Activated CD4-positive, alpha-beta memory T cell treated with anti-CD3 and anti-CD28 coated beads for 36 hours (primary cell): ENCODE measurements at regions of chr11 and their contacts with region 1.

Region 1: DNA sequence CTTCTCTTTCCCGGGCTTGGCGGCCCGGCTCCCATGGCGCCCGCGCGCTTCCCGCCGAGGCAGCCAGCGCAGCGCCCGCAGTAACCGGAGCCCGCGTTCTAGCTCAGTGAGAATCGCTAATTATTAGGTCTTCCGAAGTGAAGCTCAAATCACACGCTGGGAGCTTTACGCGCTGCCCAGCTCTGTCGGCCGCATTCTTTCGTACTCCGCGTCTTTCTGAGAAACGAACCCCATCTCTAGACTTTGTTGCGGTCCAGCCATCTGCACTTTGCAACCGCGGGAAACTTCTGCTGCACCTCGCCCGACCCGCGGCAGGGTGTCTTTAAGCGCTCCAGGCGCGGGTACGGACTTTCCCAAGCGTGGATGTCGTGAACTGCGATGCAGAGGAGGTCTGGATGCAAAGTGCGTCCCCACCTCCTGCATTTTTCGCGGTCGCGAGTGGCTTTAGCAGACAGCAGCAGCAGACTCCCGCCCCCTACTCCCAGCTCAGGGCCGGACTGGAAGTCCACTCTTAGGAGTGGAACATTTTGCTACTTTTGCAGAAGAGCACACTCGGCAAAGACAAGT is 6.0 kb upstream of the PAX6 start:
- DNase-seq: no peak
- H3K4me3 Mint-ChIP-seq: peak overlapping the region; percentile 10
- H3K27ac Mint-ChIP-seq: no peak overlapping the region
- H3K4me1 Mint-ChIP-seq: peaks cover 33% of the 10 kb centered on the region
- H3K27me3 Mint-ChIP-seq: peaks cover 67% of the 10 kb centered on the region

Region 2: GRCh38 chr11:31764766-31765165 is 52.4 kb before region 1 on chr11:
- CTCF ChIA-PET with region 1: no interaction called
- POLR2A ChIA-PET with region 1: no interaction called
- intact Hi-C with region 1: no loop called
- DNase-seq: no peak
- H3K4me3 Mint-ChIP-seq: no peak overlapping the region
- H3K27ac Mint-ChIP-seq: no peak overlapping the region
- H3K4me1 Mint-ChIP-seq: no peaks in the 10 kb centered on the region
- H3K27me3 Mint-ChIP-seq: no peaks in the 10 kb centered on the region

Region 3: DNA sequence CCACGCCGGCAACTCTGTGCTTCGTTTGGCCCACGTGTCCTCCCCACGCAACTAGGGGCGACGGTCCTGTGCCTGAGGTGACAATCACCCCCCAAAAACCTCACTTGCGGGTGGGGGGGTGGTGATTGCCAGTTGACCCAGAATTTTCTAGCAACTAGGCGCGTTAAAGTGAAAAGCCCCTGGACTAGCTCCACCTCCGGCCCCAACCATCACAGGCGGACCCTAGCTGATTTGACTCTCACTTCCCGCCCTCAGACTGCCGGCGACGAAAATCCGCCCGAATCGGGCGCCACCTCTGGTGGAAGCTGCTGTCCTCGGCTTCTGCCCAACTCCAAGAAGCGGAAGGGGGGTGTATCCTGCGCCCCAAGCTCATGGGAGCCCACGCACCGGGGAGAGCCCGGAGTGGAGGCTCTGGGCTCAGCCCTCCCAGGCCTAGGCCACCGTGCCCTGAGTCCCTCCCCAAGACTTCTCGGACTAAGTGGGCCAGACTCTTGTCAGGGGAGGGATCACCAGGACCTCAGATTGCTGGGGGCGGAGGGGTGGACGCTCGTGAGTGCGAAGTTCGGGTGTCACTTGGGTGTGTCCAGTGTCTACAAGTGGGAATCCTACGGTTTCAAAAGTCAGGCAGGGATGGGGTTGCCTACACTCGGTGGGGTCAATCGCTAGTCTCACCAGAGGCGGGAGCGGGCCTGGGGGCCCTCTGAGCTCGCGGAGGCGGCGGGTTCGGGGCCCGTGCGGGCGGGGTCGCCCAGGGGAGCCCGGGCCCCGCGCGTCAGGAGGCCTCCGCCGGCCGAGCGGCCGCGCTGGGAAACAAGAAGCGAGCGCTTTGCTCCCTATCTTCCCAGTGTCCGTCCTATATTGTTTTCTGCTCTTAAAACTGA is 18.3 kb before region 1 on chr11:
- CTCF ChIA-PET with region 1: no interaction called
- POLR2A ChIA-PET with region 1: no interaction called
- intact Hi-C with region 1: loop called (anchors 2 kb)
- DNase-seq: peak; percentile 53
- H3K4me3 Mint-ChIP-seq: peak overlapping the region; percentile 8
- H3K27ac Mint-ChIP-seq: no peak overlapping the region
- H3K4me1 Mint-ChIP-seq: peaks cover 36% of the 10 kb centered on the region
- H3K27me3 Mint-ChIP-seq: peaks cover 76% of the 10 kb centered on the region

Region 4: DNA sequence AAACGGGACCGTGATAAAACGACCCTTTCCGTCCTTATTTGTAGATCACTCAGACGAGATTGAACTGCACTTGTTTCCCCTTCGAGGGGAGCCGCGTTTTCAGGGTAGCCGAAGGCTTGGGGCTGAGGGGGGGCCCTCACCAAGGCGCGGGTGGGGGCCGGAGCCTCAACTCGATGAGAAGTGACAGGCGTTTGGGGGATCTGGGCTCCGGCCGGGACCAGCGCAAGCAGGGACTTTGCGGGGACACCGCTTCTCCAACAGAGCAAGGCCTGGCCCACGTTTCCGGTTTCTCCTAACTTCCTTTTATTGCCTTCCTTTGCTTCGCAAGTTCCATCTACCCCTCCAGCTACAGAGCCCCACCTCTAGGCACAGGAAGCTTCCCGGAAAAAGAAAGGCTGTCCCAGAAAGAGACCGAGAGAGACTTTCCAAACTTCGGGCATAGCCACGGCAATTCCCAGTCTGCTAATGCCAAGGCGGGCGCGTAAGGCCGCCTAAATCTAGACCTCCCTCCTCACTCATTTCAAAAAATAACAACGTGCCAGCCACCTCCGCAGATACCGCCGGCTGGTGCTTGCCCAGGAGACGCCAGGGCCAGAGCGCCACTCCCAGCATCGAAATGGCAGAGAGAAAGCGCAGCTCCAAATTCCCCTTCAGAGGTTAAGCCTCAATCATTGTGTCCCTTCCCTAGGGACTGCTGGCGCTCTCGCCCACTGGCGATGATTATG is 12.7 kb before region 1 on chr11:
- CTCF ChIA-PET with region 1: no interaction called
- POLR2A ChIA-PET with region 1: interaction called, 3 read pairs
- intact Hi-C with region 1: loop called (anchors 1 kb)
- DNase-seq: no peak
- H3K4me3 Mint-ChIP-seq: peak overlapping the region; percentile 17
- H3K27ac Mint-ChIP-seq: peak overlapping the region; percentile 6
- H3K4me1 Mint-ChIP-seq: peaks cover 33% of the 10 kb centered on the region
- H3K27me3 Mint-ChIP-seq: peaks cover 82% of the 10 kb centered on the region